Activated CD4-positive, alpha-beta T cell treated with anti-CD3 and anti-CD28 coated beads, Interleukin-2, amount 10 ng/mL, durations not matched to agents 7 days and 5 days (primary cell): ENCODE measurements at regions of chr6 and their contacts with region 1.

Region 1: GRCh38 chr6:158220786-158221442 is 52.8 kb downstream of the GTF2H5 start:
- DNase-seq: peak; percentile 76
- H3K4me3 Mint-ChIP-seq: no peak overlapping the region
- H3K27ac Mint-ChIP-seq: no peak overlapping the region
- H3K4me1 Mint-ChIP-seq: peaks cover 4% of the 10 kb centered on the region
- H3K27me3 Mint-ChIP-seq: peaks cover 2% of the 10 kb centered on the region

Region 2: DNA sequence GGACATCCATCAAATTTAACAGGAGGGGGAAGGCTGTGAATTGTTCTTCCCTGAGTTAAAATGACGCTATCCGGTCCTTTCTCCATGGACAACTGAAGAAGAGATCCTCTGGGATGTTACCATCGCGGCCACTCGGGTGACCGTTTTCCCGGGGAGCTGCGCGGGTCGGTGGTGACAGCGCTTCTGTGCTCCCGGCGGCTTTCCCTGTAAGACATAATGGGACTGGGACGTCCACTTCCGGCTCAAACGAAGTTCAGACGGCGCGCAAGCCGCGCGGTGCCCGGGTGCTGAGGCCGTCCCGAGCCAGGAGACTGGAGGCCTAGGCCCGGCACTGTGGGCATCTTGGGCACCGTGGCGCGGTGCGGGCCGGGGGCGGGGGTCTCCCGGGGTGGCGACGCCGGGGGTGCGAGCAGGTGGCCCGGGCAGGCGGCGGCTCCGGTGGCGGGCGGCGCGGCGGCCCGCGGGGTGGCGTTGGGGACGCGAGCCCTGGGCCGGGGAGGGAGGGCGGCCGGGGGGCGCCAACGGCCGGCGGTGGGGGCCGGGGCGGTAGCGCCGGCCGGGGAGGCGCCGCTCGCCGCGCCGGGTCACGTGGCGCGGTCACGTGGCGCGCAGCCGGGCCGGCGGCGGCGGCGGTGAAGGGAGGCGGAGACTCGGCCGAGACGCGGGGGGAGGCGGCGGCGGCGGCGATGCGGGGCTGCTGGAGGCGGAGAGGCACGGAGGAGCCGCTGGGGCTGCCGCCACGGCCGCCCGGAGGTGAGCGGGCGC is 10.8 kb after region 1 on chr6:
- CTCF ChIA-PET with region 1: interaction called, 12 read pairs
- POLR2A ChIA-PET with region 1: no interaction called
- DNase-seq: peak; percentile 74
- H3K4me3 Mint-ChIP-seq: peak overlapping the region; percentile 89
- H3K27ac Mint-ChIP-seq: peak overlapping the region; percentile 90
- H3K4me1 Mint-ChIP-seq: peaks cover 35% of the 10 kb centered on the region
- H3K27me3 Mint-ChIP-seq: peaks cover 5% of the 10 kb centered on the region